Transverse colon (tissue), 4 donors: ENCODE measurements at regions of chr11 and their contacts with region 1.

Region 1: DNA sequence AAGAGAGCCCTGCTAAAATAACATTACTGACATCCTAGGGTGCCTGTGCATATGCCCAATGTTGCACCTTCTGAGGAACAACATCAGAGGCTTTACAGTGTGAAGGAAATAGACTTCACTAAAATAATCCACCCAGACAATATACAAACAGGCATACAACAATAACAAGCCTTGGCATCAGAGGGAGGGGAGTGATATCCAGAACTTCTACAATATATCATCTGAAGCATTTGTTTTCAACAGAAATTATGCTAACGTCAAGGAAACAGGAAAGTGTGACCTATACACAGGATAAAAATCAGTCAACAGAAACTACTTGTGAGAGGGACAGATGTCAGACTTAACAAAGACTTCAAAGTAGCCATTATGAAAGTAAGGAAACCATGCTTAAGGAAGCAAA is 81.3 kb downstream of the CTNND1 start:
- DNase-seq: no peak
- H3K4me3 ChIP-seq: no peak overlapping the region
- H3K27ac ChIP-seq: no peak overlapping the region
- H3K4me1 ChIP-seq: no peaks in the 10 kb centered on the region
- H3K27me3 ChIP-seq: no peaks in the 10 kb centered on the region
- CTCF ChIP-seq: no peak
- EP300 ChIP-seq: no peak
- POLR2A ChIP-seq: no peak

Region 2: DNA sequence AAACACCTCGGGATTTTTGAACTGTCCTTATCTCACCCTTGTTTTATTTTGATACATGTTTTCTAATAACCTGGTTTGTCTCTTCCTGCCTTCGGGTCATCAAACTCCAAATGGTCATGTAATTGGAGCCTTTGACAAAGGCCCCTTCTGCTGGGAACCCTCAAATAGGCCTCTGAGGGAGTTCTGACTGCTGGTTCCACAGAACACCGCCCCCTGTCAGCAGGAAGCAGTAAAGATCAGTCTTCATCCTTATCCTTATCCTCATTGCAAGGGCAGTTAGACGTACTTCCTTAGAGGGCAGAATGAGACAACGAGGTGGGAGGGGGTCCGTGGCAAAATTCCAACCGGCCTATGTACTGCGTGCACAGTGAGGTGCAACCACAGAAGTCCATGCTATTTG is 1947.7 kb before region 1 on chr11:
- in situ Hi-C with region 1: no loop called
- intact Hi-C with region 1: no loop called
- DNase-seq: no peak
- H3K4me3 ChIP-seq: no peak overlapping the region
- H3K27ac ChIP-seq: no peak overlapping the region
- H3K4me1 ChIP-seq: no peaks in the 10 kb centered on the region
- H3K27me3 ChIP-seq: no peaks in the 10 kb centered on the region
- CTCF ChIP-seq: no peak
- EP300 ChIP-seq: no peak
- POLR2A ChIP-seq: no peak

Region 3: DNA sequence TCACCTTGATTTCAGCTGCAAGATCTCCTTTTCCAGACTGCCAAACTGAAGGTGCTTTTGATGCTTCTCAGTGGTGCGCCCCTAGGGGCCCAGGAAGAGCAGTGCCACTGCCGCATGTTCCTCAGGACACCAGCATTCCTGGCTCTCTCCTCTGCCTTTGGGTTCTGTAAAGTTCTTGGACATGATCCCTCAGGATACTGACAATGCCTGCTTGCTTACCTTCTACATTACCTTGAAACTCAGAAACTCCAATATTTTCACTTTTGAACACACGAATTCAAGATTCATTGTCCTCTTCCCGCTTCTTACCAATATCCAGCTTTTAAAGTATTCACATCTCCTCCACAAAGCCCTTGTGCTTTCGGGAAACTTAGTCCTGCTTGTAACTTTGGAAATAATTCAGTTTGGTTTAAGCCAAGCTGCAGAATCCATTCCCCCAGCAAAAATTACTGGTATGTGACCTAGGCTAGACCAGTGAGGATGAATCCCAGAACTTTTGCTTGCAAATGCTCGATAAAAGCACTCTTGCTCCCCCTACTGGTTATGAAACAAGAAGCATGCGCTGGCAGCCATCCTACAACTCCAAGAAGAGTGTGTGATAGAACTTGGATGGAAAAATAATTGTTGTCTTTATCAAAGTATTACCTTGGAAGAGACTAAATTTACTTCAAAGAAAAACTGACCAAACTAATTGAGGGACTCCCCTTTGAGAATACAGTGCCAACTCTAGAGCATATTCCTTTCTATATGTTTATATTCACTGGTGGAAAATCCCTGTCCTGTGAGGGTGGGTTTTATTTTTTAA is 681.6 kb after region 1 on chr11:
- in situ Hi-C with region 1: loop called in 2 of 4 experiments (anchors 25 kb)
- intact Hi-C with region 1: no loop called
- DNase-seq: peak; percentile 61
- H3K4me3 ChIP-seq: no peak overlapping the region
- H3K27ac ChIP-seq: peak overlapping the region; percentile 3 to 33 (median 8)
- H3K4me1 ChIP-seq: peaks cover 0 to 23% (median 8%) of the 10 kb centered on the region in 4 donors
- H3K27me3 ChIP-seq: no peaks in the 10 kb centered on the region
- CTCF ChIP-seq: peak; percentile 64 to 69 (median 66)
- EP300 ChIP-seq: no peak
- POLR2A ChIP-seq: no peak